ENCODE measurements at regions of chr2 and their contacts with region 1.

Region 1: DNA sequence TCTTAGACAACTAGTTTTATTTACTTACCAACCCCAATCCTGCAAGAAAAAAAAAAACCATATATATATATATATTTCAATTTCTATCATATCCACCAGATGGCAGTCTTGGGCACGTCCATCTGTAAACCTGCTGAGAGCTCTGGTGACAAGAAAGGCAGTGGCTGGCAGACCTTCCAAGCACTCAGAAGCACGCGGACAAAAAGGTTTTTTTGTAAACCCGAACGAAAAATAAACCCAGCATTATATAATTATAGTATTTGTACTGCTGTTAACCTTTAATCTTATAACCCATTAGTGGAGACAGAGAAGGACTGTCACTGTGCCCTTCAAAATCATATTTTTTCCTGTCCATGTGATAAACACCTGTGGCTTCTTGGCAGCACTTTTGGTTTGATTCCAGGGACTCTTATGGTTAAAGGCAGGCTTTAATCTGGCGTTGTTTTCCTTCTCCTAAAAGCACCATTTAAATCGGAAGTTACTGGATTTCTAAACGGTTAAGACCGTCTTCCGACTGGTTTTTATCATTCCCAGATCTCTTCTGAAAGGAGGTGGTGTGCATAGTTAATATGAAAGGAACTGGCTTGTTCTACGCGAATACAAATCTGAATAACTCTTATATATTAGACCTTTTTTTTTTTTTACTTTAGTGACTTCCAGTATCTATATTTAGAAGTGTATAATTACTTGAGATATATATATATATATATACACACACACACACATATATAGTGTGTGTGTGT is 31.0 kb upstream of the SLC3A1 start:
- DNase-seq: peak; percentile 64 to 71
- H3K4me3 ChIP-seq: 0 out of 2 replicates have a peak overlapping the region, but pooled peaks have one; percentile 10
- H3K4me3 Mint-ChIP-seq: peak overlapping the region; percentile 61
- H3K27ac Mint-ChIP-seq: no peak overlapping the region
- H3K4me1 ChIP-seq: peaks cover 38% of the 10 kb centered on the region
- H3K4me1 Mint-ChIP-seq: peaks cover 28% of the 10 kb centered on the region
- H3K27me3 ChIP-seq: no peaks in the 10 kb centered on the region
- H3K27me3 Mint-ChIP-seq: no peaks in the 10 kb centered on the region
- CTCF ChIP-seq: peak; percentile 53 to 66

Region 2: DNA sequence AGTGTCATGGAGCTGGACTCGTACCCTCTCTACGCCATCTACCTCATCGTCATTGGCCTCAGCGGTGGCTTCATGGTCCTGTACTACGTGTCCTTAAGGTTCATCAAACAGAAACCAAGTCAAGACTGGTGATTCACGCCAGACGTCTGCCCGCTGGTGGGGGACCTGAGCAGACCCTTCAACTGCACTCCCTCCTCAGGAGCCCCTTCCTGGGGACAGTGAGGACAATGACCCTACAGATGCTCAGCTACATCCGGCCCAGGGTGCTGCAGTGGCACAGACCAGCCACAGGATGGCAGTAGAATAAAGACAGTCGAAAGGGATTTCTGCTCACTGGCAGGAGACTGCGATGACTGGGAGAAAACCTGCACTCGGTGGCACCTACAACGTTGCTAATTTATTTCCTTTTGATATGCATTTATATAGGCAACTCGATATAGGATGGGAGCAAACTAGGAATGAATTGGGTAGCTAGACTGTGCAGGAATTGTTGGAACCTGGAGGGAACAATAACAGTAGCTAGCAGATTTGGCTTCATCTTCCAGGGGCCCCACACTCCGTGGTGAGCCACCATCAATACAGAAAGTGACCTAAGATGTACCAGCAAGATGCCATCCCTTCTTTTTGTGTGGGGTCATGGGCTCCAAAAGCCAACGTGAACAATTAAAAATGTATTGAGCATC is 366.4 kb before region 1 on chr2:
- CTCF ChIA-PET with region 1: no interaction called
- POLR2A ChIA-PET with region 1: no interaction called
- intact Hi-C with region 1: loop called (anchors 5 kb)
- DNase-seq: peak; percentile 75 to 83
- H3K4me3 ChIP-seq: no peak overlapping the region
- H3K4me3 Mint-ChIP-seq: no peak overlapping the region
- H3K27ac Mint-ChIP-seq: no peak overlapping the region
- H3K4me1 ChIP-seq: no peaks in the 10 kb centered on the region; the same call in 1 of the 2 replicates
- H3K4me1 Mint-ChIP-seq: peaks cover 10% of the 10 kb centered on the region
- H3K27me3 ChIP-seq: no peaks in the 10 kb centered on the region
- H3K27me3 Mint-ChIP-seq: peaks cover 3% of the 10 kb centered on the region
- CTCF ChIP-seq: peak; percentile 95 to 96

Region 3: GRCh38 chr2:43995733-43996533 is 248.4 kb before region 1 on chr2 and contains the start of gene LRPPRC:
- CTCF ChIA-PET with region 1: no interaction called
- POLR2A ChIA-PET with region 1: no interaction called
- intact Hi-C with region 1: loop called (anchors 5 kb)
- DNase-seq: peak; percentile 95 to 97
- H3K4me3 ChIP-seq: peak within 1 kb of the TSS; percentile 98
- H3K4me3 Mint-ChIP-seq: peak within 1 kb of the TSS; percentile 92
- H3K27ac Mint-ChIP-seq: peak within 1 kb of the TSS; percentile 100
- H3K4me1 ChIP-seq: peaks cover 15% of the 10 kb centered on the region
- H3K4me1 Mint-ChIP-seq: peaks cover 37% of the 10 kb centered on the region
- H3K27me3 ChIP-seq: no peaks in the 10 kb centered on the region
- H3K27me3 Mint-ChIP-seq: no peaks in the 10 kb centered on the region
- CTCF ChIP-seq: no peak
- total RNA-seq, gene LRPPRC: 242 and 244 TPM in 2 replicates

Region 4: GRCh38 chr2:44087036-44087713 is 157.1 kb before region 1 on chr2:
- CTCF ChIA-PET with region 1: no interaction called
- POLR2A ChIA-PET with region 1: no interaction called
- intact Hi-C with region 1: loop called (anchors 1 kb)
- DNase-seq: peak; percentile 83 to 93
- H3K4me3 ChIP-seq: peak overlapping the region; percentile 32
- H3K4me3 Mint-ChIP-seq: peak overlapping the region; percentile 73
- H3K27ac Mint-ChIP-seq: peak overlapping the region; percentile 80
- H3K4me1 ChIP-seq: peaks cover 30% of the 10 kb centered on the region
- H3K4me1 Mint-ChIP-seq: peaks cover 49% of the 10 kb centered on the region
- H3K27me3 ChIP-seq: no peaks in the 10 kb centered on the region
- H3K27me3 Mint-ChIP-seq: no peaks in the 10 kb centered on the region
- CTCF ChIP-seq: peak; percentile 94 to 96

Region 5: DNA sequence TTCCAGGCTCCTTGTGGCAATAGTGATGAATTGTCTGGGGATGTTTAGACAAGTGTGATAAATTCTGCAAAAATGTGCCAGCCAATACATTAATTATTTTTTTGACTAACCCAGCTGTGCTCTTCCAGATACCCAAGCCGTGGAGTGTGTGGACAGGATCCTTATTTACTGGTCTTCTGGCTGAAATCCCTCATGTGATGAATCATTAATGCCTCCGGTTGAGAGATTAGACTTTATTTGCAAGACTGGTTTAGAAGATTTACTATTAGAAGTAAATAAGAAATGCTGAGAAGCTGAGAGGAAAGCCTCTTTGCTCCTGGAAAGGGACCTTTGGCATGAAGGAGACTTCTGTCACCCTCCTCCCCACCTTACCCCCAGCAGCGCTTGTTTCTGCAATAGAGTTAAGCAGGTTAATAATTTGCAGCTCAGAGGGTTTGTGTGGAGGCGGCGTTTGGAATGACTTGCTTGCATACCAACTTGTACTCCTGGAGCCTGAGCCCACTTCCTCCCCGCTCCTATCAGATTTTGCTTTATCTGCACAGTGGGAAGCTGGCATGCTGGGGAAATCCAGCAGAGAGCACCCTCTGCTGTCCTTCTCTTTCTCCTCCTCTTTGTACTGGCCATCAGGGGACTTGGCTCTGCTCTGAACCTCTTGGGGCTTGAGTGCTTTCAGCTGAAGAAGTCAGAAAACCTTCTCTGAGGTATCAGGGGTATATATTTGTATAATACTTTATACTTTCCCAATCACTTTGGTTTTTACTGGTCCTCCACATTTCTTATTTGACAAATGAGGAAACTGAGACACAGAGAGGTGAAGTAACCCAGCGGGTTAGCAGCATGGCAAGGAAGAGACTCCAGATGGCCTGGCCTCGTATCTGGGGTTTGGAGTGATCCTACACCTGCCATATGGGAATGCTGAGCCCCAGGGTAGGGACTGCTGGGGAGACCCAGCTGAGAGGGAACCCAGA is 47.3 kb after region 1 on chr2:
- CTCF ChIA-PET with region 1: interaction called, 53 read pairs
- POLR2A ChIA-PET with region 1: no interaction called
- intact Hi-C with region 1: loop called (anchors 1 kb)
- DNase-seq: peak; percentile 92 to 97
- H3K4me3 ChIP-seq: 0 out of 2 replicates have a peak overlapping the region, but pooled peaks have one; percentile 5
- H3K4me3 Mint-ChIP-seq: peak overlapping the region; percentile 55
- H3K27ac Mint-ChIP-seq: peak overlapping the region; percentile 62
- H3K4me1 ChIP-seq: peaks cover 52% of the 10 kb centered on the region
- H3K4me1 Mint-ChIP-seq: peaks cover 45% of the 10 kb centered on the region
- H3K27me3 ChIP-seq: no peaks in the 10 kb centered on the region
- H3K27me3 Mint-ChIP-seq: no peaks in the 10 kb centered on the region
- CTCF ChIP-seq: peak; percentile 78 to 87

Region 6: DNA sequence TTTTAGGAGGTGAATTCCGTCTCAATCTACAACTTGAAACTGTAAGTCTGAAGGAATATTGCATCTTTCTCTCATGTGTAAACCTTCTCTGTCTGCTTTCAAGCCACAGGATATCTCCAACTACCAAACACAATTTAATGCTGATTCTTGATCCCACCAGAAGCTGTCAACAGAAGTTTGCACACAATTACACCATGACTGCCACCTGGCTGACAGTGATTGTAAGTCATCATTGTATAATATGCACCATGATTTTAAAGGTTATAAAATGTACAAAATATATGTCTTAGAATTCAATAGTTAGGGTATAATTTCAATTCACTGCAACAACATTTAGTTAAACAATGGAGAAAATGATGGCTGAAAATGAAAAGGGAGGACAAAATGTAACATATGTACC is 98.6 kb after region 1 on chr2:
- CTCF ChIA-PET with region 1: interaction called, 5 read pairs
- POLR2A ChIA-PET with region 1: no interaction called
- intact Hi-C with region 1: loop called (anchors 1 kb)
- DNase-seq: peak in 1 of 2 experiments; percentile 43
- H3K4me3 ChIP-seq: no peak overlapping the region
- H3K4me3 Mint-ChIP-seq: no peak overlapping the region
- H3K27ac Mint-ChIP-seq: no peak overlapping the region
- H3K4me1 ChIP-seq: no peaks in the 10 kb centered on the region
- H3K4me1 Mint-ChIP-seq: no peaks in the 10 kb centered on the region
- H3K27me3 ChIP-seq: no peaks in the 10 kb centered on the region
- H3K27me3 Mint-ChIP-seq: no peaks in the 10 kb centered on the region
- CTCF ChIP-seq: peak; percentile 46 to 47

Region 7: GRCh38 chr2:44715671-44716081 is 471.4 kb after region 1 on chr2:
- CTCF ChIA-PET with region 1: interaction called, 3 read pairs
- POLR2A ChIA-PET with region 1: no interaction called
- intact Hi-C with region 1: loop called (anchors 10 kb)
- DNase-seq: peak; percentile 44 to 55
- H3K4me3 ChIP-seq: no peak overlapping the region
- H3K4me3 Mint-ChIP-seq: no peak overlapping the region
- H3K27ac Mint-ChIP-seq: no peak overlapping the region
- H3K4me1 ChIP-seq: no peaks in the 10 kb centered on the region
- H3K4me1 Mint-ChIP-seq: no peaks in the 10 kb centered on the region
- H3K27me3 ChIP-seq: no peaks in the 10 kb centered on the region
- H3K27me3 Mint-ChIP-seq: no peaks in the 10 kb centered on the region
- CTCF ChIP-seq: peak; percentile 51 to 58

Measured in Caco-2 (cell line).